ENCODE measurements at regions of chr14 and their contacts with region 1.

Region 1: GRCh38 chr14:76887196-76887595 is 61.0 kb downstream of the LRRC74A start:
- DNase-seq: no peak
- H3K4me3 ChIP-seq: no peak overlapping the region
- H3K27ac ChIP-seq: no peak overlapping the region
- H3K4me1 ChIP-seq: no peaks in the 10 kb centered on the region
- H3K27me3 ChIP-seq: no peaks in the 10 kb centered on the region
- CTCF ChIP-seq: no peak

Region 2: DNA sequence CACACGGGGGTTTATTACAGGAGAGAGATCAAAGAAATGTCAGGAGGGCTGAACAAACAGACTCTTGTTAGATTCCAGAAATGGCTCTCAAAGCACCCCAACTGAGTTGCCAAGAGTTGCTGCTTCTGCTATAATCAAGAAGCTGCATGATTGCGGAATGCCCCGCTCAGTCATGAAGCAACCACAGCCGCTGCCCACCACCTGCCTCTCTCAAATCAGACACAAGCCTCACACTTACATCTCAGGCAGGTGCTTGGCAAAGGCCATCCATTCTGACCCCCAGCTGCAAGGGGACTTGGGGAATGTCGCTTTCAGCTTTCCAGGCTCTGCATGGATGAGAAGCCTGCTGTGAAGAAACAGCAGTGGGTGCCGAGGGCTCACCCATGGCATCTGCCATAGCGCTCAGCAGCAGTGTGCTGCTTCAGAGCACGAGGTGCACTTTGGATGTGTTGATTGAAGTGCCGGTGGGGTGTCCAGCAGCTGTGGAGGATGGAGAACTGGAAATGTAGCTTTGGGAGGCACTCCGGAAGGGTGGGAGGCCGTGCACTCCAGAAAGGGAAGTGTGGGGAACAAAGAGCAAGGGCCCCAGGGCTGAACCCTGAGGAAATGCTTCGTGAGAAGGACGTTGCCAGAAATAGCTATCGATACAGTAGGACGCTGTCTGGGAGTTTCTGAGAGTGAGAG is 23.3 kb before region 1 on chr14:
- CTCF ChIA-PET with region 1: no interaction called
- POLR2A ChIA-PET with region 1: no interaction called
- intact Hi-C with region 1: no loop called
- DNase-seq: peak; percentile 53 to 59
- H3K4me3 ChIP-seq: no peak overlapping the region
- H3K27ac ChIP-seq: no peak overlapping the region
- H3K4me1 ChIP-seq: no peaks in the 10 kb centered on the region; the same call in 1 of the 2 replicates
- H3K27me3 ChIP-seq: peaks cover 68% of the 10 kb centered on the region
- CTCF ChIP-seq: no peak

Region 3: DNA sequence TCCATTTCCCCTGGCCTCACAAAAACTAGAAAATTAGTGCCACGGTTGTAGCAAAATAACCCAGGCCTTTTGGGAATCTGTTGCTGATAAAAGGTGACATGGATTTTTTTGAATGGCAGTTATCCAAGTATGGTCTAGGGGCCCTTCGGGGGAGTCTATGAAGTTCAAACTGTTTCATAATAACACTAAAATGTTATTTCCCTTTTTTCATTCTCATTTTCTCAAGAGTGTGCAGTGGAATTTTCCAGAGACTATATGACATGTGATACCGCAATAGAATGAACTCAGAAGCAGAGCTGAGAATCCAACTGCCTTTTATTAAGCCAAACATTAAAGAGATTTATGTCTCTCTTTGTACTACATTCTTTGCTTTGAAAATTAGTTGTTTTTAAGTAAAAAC is 460.6 kb after region 1 on chr14:
- CTCF ChIA-PET with region 1: interaction called, 14 read pairs
- POLR2A ChIA-PET with region 1: no interaction called
- intact Hi-C with region 1: no loop called
- DNase-seq: no peak
- H3K4me3 ChIP-seq: no peak overlapping the region
- H3K27ac ChIP-seq: no peak overlapping the region
- H3K4me1 ChIP-seq: no peaks in the 10 kb centered on the region
- H3K27me3 ChIP-seq: no peaks in the 10 kb centered on the region
- CTCF ChIP-seq: no peak

Measured in PC-9 (cell line).